T-cell (primary cell): ENCODE measurements at regions of chr1 and their contacts with region 1.

Region 1: DNA sequence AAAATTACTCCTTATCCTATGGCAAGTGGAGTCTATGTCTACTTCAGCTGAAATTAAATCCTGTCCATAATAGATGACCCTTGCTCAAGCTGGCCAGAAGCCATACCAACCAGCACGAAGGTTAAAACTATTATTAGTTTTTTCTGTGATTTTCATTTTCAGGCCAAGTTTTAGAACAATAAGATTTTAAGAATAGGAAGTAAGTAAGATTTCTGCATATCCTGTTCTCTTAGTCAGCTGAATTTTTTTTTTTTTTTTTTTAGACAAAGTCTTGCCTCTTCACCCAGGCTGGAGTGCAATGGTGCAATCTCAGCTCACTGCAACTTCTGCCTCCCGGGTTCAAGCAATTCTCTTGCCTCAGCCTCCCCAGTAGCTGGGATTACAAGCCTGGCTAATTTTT is 6.1 kb upstream of the RBP7 start:
- DNase-seq: no peak
- ATAC-seq: no peak
- H3K4me3 ChIP-seq: no peak overlapping the region
- H3K4me3 Mint-ChIP-seq: no peak overlapping the region
- H3K27ac ChIP-seq: no peak overlapping the region
- H3K27ac Mint-ChIP-seq: no peak overlapping the region
- H3K4me1 ChIP-seq: no peaks in the 10 kb centered on the region
- H3K4me1 Mint-ChIP-seq: peaks cover 0 to 6% (median 0%) of the 10 kb centered on the region in 3 donors
- H3K27me3 ChIP-seq: peaks cover 0 to 20% of the 10 kb centered on the region in 2 experiments
- H3K27me3 Mint-ChIP-seq: peaks cover 11 to 12% of the 10 kb centered on the region in 2 donors

Region 2: GRCh38 chr1:10161541-10162290 is 170.8 kb after region 1 on chr1:
- CTCF ChIA-PET with region 1: no interaction called
- POLR2A ChIA-PET with region 1: interaction called in 1 of 2 experiments, 10 read pairs
- DNase-seq: no peak
- ATAC-seq: no peak
- H3K4me3 ChIP-seq: no peak overlapping the region
- H3K4me3 Mint-ChIP-seq: no peak overlapping the region
- H3K27ac ChIP-seq: no peak overlapping the region
- H3K27ac Mint-ChIP-seq: no peak overlapping the region
- H3K4me1 ChIP-seq: no peaks in the 10 kb centered on the region
- H3K4me1 Mint-ChIP-seq: no peaks in the 10 kb centered on the region
- H3K27me3 ChIP-seq: no peaks in the 10 kb centered on the region
- H3K27me3 Mint-ChIP-seq: no peaks in the 10 kb centered on the region